B cell (primary cell): ENCODE measurements at regions of chr9 and their contacts with region 1.

Region 1: GRCh38 chr9:100011062-100011681 is 87.6 kb downstream of the ERP44 start:
- DNase-seq: peak; percentile 66
- ATAC-seq: no peak
- H3K4me3 ChIP-seq: no peak overlapping the region
- H3K4me3 Mint-ChIP-seq: no peak overlapping the region
- H3K27ac ChIP-seq: no peak overlapping the region
- H3K27ac Mint-ChIP-seq: no peak overlapping the region
- H3K4me1 ChIP-seq: no peaks in the 10 kb centered on the region
- H3K4me1 Mint-ChIP-seq: no peaks in the 10 kb centered on the region
- H3K27me3 ChIP-seq: no peaks in the 10 kb centered on the region
- H3K27me3 Mint-ChIP-seq: no peaks in the 10 kb centered on the region
- CTCF ChIP-seq: peak; percentile 82

Region 2: DNA sequence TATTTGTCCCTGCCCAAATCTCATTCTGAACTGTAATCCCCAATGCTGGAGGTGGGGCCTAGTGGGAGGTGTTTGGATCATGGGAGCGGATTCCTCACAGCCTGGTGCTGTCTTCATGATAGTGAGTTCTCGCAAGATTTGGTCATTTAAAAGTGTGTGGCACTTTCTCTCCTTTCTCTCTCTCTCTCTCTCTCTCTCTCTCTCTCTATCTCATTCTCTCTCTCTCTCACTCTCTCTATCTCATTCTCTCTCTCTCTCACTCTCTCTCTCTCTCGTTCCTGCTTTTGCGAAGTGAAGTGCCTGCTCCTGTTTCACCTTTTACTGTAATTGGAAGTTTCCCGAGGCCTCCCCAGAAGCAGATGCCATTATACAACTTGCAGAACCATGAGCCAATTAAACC is 396.8 kb before region 1 on chr9:
- CTCF ChIA-PET with region 1: no interaction called
- POLR2A ChIA-PET with region 1: no interaction called
- intact Hi-C with region 1: no loop called
- DNase-seq: no peak
- ATAC-seq: no peak
- H3K4me3 ChIP-seq: no peak overlapping the region
- H3K4me3 Mint-ChIP-seq: no peak overlapping the region
- H3K27ac ChIP-seq: no peak overlapping the region
- H3K27ac Mint-ChIP-seq: no peak overlapping the region
- H3K4me1 ChIP-seq: no peaks in the 10 kb centered on the region
- H3K4me1 Mint-ChIP-seq: no peaks in the 10 kb centered on the region
- H3K27me3 ChIP-seq: no peaks in the 10 kb centered on the region
- H3K27me3 Mint-ChIP-seq: no peaks in the 10 kb centered on the region
- CTCF ChIP-seq: no peak

Region 3: GRCh38 chr9:99803694-99804093 is 207.5 kb before region 1 on chr9:
- CTCF ChIA-PET with region 1: interaction called, 4 read pairs
- POLR2A ChIA-PET with region 1: no interaction called
- intact Hi-C with region 1: loop called (anchors 5 kb)
- DNase-seq: no peak
- ATAC-seq: no peak
- H3K4me3 ChIP-seq: no peak overlapping the region
- H3K4me3 Mint-ChIP-seq: no peak overlapping the region
- H3K27ac ChIP-seq: no peak overlapping the region
- H3K27ac Mint-ChIP-seq: no peak overlapping the region
- H3K4me1 ChIP-seq: no peaks in the 10 kb centered on the region
- H3K4me1 Mint-ChIP-seq: peaks cover 16% of the 10 kb centered on the region
- H3K27me3 ChIP-seq: no peaks in the 10 kb centered on the region
- H3K27me3 Mint-ChIP-seq: no peaks in the 10 kb centered on the region
- CTCF ChIP-seq: no peak